ENCODE measurements at regions of chr5 and their contacts with region 1.

Region 1: GRCh38 chr5:65190328-65191053 is 291.2 kb downstream of the ADAMTS6 start:
- DNase-seq: no peak
- H3K4me3 Mint-ChIP-seq: no peak overlapping the region
- H3K27ac Mint-ChIP-seq: peak overlapping the region; percentile 64
- H3K4me1 Mint-ChIP-seq: peaks cover 8% of the 10 kb centered on the region
- H3K27me3 Mint-ChIP-seq: no peaks in the 10 kb centered on the region

Region 2: DNA sequence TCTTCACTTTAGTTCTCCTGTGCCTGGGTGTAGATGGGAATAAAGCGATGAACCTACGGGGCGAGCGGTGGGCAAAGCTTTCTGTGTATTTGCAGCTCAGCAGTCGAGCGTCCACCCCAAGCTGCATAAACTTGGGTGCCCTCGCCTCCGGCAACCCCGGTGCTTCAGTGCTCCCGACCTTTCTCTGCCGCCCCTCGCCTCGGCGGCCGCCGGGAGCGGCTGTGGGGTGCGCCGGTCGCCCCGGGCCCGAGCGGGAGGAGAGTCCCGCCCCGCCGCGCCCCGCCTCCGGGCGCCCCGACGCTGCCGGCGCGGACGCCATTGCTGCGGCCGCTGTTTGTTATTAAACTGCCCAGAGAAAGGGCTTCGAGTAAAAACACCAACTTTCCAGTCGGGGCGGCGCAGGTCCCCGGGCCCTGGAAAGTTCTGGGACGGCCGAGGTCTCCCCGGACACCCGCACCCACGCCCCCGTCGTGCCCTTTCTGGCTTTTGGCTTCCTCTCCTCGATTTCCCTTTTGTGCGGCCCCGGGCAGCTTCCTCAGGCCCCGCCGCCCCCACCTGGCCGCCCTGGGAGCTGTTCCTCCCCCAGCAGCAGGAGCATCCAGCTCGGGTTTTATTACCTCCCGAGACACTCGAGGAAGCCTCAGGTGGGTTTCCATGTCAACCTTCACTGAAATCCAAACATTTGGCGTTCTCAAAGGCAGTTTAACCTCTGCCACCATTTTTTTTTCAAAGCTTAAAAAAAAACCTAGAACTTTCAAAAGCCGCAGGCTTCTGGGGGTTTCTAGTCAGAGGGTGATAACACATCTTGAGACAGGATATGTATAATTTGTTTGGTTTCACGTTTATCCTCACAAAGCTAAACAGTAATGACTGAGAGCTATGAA is 87.4 kb before region 1 on chr5:
- intact Hi-C with region 1: loop called (anchors 10 kb)
- DNase-seq: peak; percentile 80
- H3K4me3 Mint-ChIP-seq: peak overlapping the region; percentile 80
- H3K27ac Mint-ChIP-seq: peak overlapping the region; percentile 74
- H3K4me1 Mint-ChIP-seq: peaks cover 30% of the 10 kb centered on the region
- H3K27me3 Mint-ChIP-seq: peaks cover 13% of the 10 kb centered on the region

Region 3: DNA sequence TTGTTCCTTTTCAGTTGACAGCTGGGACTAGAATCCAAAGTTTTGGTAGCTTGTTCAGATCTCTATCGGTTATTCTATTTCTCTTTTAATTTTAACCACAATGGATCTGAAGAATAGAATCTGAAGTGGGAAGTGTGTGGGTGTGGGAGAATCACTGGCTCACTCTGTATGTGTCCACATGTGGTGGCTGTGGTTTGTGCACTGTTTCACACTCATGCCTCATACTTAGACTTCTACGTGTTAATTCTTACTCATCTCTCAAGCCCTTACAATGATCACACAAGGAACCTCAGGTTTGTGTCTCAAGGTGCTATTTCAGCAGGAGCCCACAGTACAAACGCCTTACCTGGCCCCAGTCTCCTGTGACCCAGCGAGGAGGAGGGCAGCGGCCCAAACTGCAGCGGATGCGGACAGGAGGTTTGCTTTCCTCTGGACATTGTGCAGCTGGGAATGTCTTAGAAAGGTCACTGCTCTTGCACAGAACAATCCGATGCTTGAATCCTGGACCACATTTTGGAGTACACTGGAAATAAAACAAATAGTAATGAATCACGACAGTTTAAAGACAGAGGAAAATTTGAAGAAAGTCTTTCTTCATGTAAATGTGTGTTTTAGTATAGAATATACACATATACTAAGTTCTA is 17.9 kb before region 1 on chr5:
- intact Hi-C with region 1: loop called (anchors 1 kb)
- DNase-seq: peak; percentile 58
- H3K4me3 Mint-ChIP-seq: no peak overlapping the region
- H3K27ac Mint-ChIP-seq: no peak overlapping the region
- H3K4me1 Mint-ChIP-seq: peaks cover 3% of the 10 kb centered on the region
- H3K27me3 Mint-ChIP-seq: peaks cover 9% of the 10 kb centered on the region

Region 4: GRCh38 chr5:65262649-65263059 is 72.2 kb after region 1 on chr5:
- intact Hi-C with region 1: no loop called
- DNase-seq: no peak
- H3K4me3 Mint-ChIP-seq: no peak overlapping the region
- H3K27ac Mint-ChIP-seq: no peak overlapping the region
- H3K4me1 Mint-ChIP-seq: no peaks in the 10 kb centered on the region
- H3K27me3 Mint-ChIP-seq: peaks cover 4% of the 10 kb centered on the region

Region 5: GRCh38 chr5:65577141-65577540 is 386.6 kb after region 1 on chr5:
- intact Hi-C with region 1: no loop called
- DNase-seq: no peak
- H3K4me3 Mint-ChIP-seq: no peak overlapping the region
- H3K27ac Mint-ChIP-seq: peak overlapping the region; percentile 77
- H3K4me1 Mint-ChIP-seq: peaks cover 16% of the 10 kb centered on the region
- H3K27me3 Mint-ChIP-seq: no peaks in the 10 kb centered on the region